Activated B cell treated with CpG ODN at 0.5 μM for 24 hours (primary cell): ENCODE measurements at regions of chr4 and their contacts with region 1.

Region 1: DNA sequence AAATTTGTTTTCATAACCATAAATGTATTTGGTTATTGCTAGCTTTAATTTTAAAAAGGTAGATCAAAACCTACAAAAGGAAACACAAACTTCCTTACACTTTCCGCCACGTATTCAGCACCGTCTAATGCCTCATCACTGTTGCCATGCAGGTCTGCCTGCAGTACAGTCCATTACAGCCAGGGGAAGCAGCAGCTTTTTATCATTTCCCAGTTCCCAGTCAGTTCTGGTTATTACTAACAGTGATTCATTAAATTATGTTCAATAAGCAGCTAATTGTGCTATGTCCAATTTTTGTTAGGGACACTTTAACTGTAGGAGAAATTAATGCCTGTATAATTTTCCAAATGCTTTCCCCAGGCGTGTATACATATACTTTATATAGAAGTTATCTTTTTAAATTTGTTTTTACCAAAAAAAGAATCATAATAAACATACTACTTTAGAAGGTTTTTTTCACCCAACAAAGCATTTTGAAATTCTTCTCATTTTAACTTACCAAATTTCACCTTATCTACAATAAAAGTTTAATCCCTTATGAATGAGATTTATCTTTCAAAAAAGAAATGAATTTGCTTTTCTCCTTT is 93.3 kb downstream of the ANXA3 start:
- DNase-seq: no peak
- ATAC-seq: peak; percentile 98
- H3K4me3 Mint-ChIP-seq: peak overlapping the region; percentile 26
- H3K27ac Mint-ChIP-seq: peak overlapping the region; percentile 53
- H3K4me1 Mint-ChIP-seq: peaks cover 70% of the 10 kb centered on the region
- H3K27me3 Mint-ChIP-seq: no peaks in the 10 kb centered on the region
- CTCF ChIP-seq: peak; percentile 39

Region 2: DNA sequence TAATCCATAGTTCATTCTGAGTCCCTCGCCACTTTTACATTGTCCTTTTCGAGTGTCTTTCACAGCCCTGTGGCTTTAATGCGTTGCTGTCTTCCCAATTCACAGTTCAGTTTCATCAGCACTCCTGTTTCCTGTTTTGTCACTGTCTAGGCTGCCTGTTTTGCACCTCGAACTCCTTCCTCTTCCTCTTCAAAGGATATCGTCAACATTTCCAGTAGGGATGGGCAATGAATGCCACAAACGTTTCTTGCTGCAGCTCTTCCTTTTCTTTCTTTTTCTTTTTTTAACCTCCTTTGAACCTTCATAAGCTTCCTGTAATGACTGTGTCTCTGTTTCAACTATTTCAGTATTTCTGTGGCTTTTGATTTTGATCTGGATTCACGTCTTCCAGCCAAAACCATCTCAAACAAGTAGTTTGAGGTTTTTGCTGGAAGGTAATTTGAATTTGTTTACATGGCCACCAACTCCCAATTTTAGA is 12.2 kb after region 1 on chr4:
- CTCF ChIA-PET with region 1: interaction called, 15 read pairs
- POLR2A ChIA-PET with region 1: interaction called, 10 read pairs
- intact Hi-C with region 1: loop called (anchors 1 kb)
- DNase-seq: no peak
- ATAC-seq: no peak
- H3K4me3 Mint-ChIP-seq: peak overlapping the region; percentile 72
- H3K27ac Mint-ChIP-seq: peak overlapping the region; percentile 85
- H3K4me1 Mint-ChIP-seq: peaks cover 51% of the 10 kb centered on the region
- H3K27me3 Mint-ChIP-seq: no peaks in the 10 kb centered on the region
- CTCF ChIP-seq: no peak

Region 3: GRCh38 chr4:78667764-78668163 is 22.9 kb after region 1 on chr4:
- CTCF ChIA-PET with region 1: interaction called, 15 read pairs
- POLR2A ChIA-PET with region 1: interaction called, 4 read pairs
- intact Hi-C with region 1: loop called (anchors 1 kb)
- DNase-seq: no peak
- ATAC-seq: peak; percentile 79
- H3K4me3 Mint-ChIP-seq: peak overlapping the region; percentile 54
- H3K27ac Mint-ChIP-seq: peak overlapping the region; percentile 83
- H3K4me1 Mint-ChIP-seq: peaks cover 85% of the 10 kb centered on the region
- H3K27me3 Mint-ChIP-seq: no peaks in the 10 kb centered on the region
- CTCF ChIP-seq: no peak

Region 4: GRCh38 chr4:78749972-78750727 is 105.3 kb after region 1 on chr4:
- CTCF ChIA-PET with region 1: interaction called, 3 read pairs
- POLR2A ChIA-PET with region 1: interaction called, 6 read pairs
- intact Hi-C with region 1: loop called (anchors 1 kb)
- DNase-seq: no peak
- ATAC-seq: peak; percentile 83
- H3K4me3 Mint-ChIP-seq: peak overlapping the region; percentile 74
- H3K27ac Mint-ChIP-seq: peak overlapping the region; percentile 93
- H3K4me1 Mint-ChIP-seq: peaks cover 72% of the 10 kb centered on the region
- H3K27me3 Mint-ChIP-seq: no peaks in the 10 kb centered on the region
- CTCF ChIP-seq: no peak